ENCODE measurements at regions of chr3 and their contacts with region 1.

Region 1: GRCh38 chr3:48400824-48401433 is 28.9 kb downstream of the FBXW12 start:
- DNase-seq: peak; percentile 81
- H3K4me3 ChIP-seq: no peak overlapping the region
- H3K27ac ChIP-seq: no peak overlapping the region; a peak in 1 of 4 replicates
- H3K4me1 ChIP-seq: peaks cover 6 to 23% of the 10 kb centered on the region in 2 experiments; a peak in 2 of 4 replicates
- H3K27me3 ChIP-seq: no peaks in the 10 kb centered on the region
- CTCF ChIP-seq: peak; percentile 82
- EP300 ChIP-seq: no peak
- RAD21 ChIP-seq: peak; percentile 86

Region 2: DNA sequence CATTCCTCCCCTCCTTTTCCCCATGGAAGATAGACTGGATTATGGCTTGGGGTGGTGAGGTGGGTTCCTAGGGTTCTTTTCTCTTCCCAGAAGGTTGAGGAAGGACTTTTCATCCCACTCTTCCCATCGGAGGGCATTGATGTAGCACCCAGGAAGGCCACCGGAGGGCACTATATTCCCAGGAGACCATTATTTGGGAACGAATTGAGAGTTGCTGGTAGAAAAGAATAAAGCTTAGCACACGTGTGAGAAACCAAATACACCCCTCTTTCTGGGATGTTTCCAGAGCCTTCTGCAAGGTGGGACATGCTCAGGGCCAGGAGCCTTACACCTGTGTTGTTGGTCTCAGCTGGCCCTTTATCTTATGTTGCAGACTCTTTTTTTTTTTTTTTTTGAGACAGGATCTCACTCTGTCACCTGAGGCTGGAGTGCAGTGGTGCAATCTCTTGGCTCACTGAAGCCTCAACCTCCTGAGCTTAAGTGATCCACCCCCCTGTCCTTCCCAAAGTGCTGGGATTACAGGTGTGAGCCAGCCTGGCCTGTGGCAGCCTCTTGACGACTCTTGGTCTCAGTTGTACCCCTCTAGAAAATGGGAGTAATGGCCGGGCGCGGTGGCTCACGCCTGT is 206.4 kb before region 1 on chr3:
- CTCF ChIA-PET with region 1: interaction called, 12 read pairs
- POLR2A ChIA-PET with region 1: no interaction called
- DNase-seq: peak; percentile 82
- H3K4me3 ChIP-seq: peak overlapping the region in 1 of 2 experiments; percentile 42; a peak in 1 of 4 replicates
- H3K27ac ChIP-seq: no peak overlapping the region
- H3K4me1 ChIP-seq: no peaks in the 10 kb centered on the region
- H3K27me3 ChIP-seq: no peaks in the 10 kb centered on the region
- CTCF ChIP-seq: peak; percentile 91
- EP300 ChIP-seq: no peak
- RAD21 ChIP-seq: peak; percentile 80

Region 3: GRCh38 chr3:48352547-48352946 is 48.4 kb before region 1 on chr3:
- CTCF ChIA-PET with region 1: interaction called, 20 read pairs
- POLR2A ChIA-PET with region 1: interaction called, 6 read pairs
- DNase-seq: peak; percentile 64
- H3K4me3 ChIP-seq: no peak overlapping the region
- H3K27ac ChIP-seq: peak overlapping the region in 1 of 2 experiments; percentile 97; a peak in 2 of 4 replicates
- H3K4me1 ChIP-seq: peaks cover 0 to 29% of the 10 kb centered on the region in 2 experiments; a peak in 2 of 4 replicates
- H3K27me3 ChIP-seq: no peaks in the 10 kb centered on the region
- CTCF ChIP-seq: no peak
- EP300 ChIP-seq: peak in 1 of 2 experiments; percentile 95; a peak in 2 of 4 replicates
- RAD21 ChIP-seq: peak; percentile 36

Region 4: GRCh38 chr3:48372377-48372770 is 28.6 kb before region 1 on chr3:
- CTCF ChIA-PET with region 1: interaction called, 15 read pairs
- POLR2A ChIA-PET with region 1: interaction called, 3 read pairs
- DNase-seq: no peak
- H3K4me3 ChIP-seq: no peak overlapping the region
- H3K27ac ChIP-seq: no peak overlapping the region
- H3K4me1 ChIP-seq: peaks cover 0 to 29% of the 10 kb centered on the region in 2 experiments; a peak in 1 of 4 replicates
- H3K27me3 ChIP-seq: no peaks in the 10 kb centered on the region
- CTCF ChIP-seq: no peak
- EP300 ChIP-seq: no peak
- RAD21 ChIP-seq: no peak

Region 5: GRCh38 chr3:48415554-48415953 is 14.6 kb after region 1 on chr3:
- CTCF ChIA-PET with region 1: interaction called, 61 read pairs
- POLR2A ChIA-PET with region 1: no interaction called
- DNase-seq: peak; percentile 31
- H3K4me3 ChIP-seq: no peak overlapping the region
- H3K27ac ChIP-seq: no peak overlapping the region
- H3K4me1 ChIP-seq: no peaks in the 10 kb centered on the region; a peak in 1 of 4 replicates
- H3K27me3 ChIP-seq: no peaks in the 10 kb centered on the region
- CTCF ChIP-seq: no peak
- EP300 ChIP-seq: no peak
- RAD21 ChIP-seq: no peak

Region 6: DNA sequence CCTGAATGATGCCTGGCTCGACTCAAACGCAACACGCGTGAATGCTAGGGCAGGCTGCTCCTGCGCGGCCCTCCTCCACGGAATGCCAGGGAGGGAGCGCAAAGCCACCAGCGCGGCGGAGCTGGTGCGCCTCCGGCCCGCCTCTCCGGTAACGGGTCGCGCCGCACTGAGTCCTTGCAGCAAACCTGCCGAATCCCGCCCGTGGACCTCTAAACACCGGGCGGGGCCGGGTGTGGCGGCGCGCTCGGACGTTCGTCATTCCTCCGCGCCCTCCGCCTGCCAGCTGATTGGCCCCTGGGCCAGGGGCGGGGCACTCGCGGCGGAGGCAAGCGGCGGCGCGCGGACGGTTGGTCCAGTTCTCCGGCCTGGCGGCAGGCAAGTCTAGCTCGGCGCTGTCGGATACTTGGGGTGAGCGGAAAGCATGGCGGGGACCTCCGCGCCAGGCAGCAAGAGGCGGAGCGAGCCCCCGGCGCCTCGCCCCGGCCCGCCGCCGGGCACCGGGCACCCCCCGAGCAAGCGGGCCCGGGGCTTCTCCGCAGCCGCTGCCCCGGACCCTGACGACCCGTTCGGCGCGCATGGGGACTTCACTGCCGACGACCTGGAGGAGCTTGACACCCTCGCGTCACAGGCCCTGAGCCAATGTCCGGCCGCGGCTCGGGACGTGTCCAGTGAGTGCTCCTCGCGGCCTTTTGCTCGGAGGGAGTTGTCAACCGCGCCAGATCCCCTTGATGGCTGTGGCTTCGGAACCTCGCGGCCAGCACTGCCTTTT is 45.7 kb after region 1 on chr3 and contains the start of gene ATRIP:
- CTCF ChIA-PET with region 1: interaction called, 14 read pairs
- POLR2A ChIA-PET with region 1: interaction called, 3 read pairs
- DNase-seq: peak; percentile 98
- H3K4me3 ChIP-seq: peak within 1 kb of the TSS; percentile 77 to 97
- H3K27ac ChIP-seq: peak within 1 kb of the TSS; percentile 68 to 74
- H3K4me1 ChIP-seq: peaks cover 5 to 18% of the 10 kb centered on the region in 2 experiments
- H3K27me3 ChIP-seq: no peaks in the 10 kb centered on the region
- CTCF ChIP-seq: no peak
- EP300 ChIP-seq: no peak
- RAD21 ChIP-seq: no peak
- polyA plus RNA-seq, gene ATRIP: 5.6 and 6.5 TPM in 2 replicates